G401 (cell line): ENCODE measurements at regions of chr5 and their contacts with region 1.

Region 1: GRCh38 chr5:88140856-88141752 is 127.5 kb downstream of the TMEM161B start:
- DNase-seq: peak; percentile 100

Region 2: GRCh38 chr5:88183255-88183654 is 42.2 kb after region 1 on chr5:
- in situ Hi-C with region 1: no loop called
- DNase-seq: no peak

Region 3: DNA sequence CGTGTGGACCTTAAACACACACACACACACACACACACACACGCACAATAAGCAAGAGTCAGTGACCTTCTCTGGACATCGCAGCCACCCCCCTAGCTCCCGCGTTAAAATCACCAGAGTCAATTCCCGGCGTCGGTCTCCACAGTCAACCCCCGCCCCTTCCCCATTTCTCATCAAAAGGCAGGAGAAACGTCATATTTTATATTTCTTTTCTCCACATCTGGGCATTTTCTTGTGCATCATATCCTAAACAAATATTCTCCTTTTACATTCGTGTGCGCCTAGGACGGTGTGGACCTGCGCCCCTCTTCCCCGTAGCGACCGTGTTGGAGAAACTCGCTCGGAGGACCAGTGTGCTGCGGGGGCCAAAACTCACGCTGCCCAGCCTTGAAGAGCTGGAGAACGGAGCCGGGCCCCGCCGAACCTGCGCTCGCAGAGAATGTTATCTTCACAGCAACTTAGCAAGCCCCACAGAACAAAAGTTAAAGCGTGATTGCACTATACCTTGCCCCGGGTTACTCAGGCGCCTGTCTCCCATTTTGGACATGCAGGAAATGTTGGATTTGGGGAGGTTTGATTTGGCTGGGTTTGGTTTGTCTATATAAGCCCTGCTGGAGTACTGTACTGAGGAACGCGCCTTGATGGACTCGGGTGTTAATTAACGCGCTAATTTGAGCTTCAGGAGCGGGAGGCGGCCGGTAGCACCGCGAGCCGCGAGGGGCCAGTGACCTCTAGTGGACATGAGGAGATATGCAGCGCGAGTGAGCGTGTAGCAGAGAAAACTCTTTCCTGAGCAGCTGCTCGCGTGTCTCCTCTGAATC is 549.5 kb after region 1 on chr5:
- in situ Hi-C with region 1: loop called (anchors 25 kb)
- DNase-seq: peak; percentile 97